Right lobe of liver (tissue), 6 donors: ENCODE measurements at regions of chr11 and their contacts with region 1.

Region 1: GRCh38 chr11:69101115-69101791 is 52.5 kb downstream of the TPCN2 start:
- DNase-seq: peak; percentile 79 to 82 (median 82)
- ATAC-seq: peak; percentile 95
- H3K4me3 ChIP-seq: no peak overlapping the region
- H3K27ac ChIP-seq: no peak overlapping the region
- H3K4me1 ChIP-seq: peaks cover 0 to 2% (median 0%) of the 10 kb centered on the region in 4 donors
- H3K27me3 ChIP-seq: no peaks in the 10 kb centered on the region
- CTCF ChIP-seq: peak; percentile 99 to 100 (median 99)
- POLR2A ChIP-seq: no peak

Region 2: GRCh38 chr11:69645295-69645694 is 544.0 kb after region 1 on chr11:
- intact Hi-C with region 1: loop called in 1 of 2 experiments (anchors 5 kb)
- DNase-seq: peak in 2 of 3 donors; percentile 14 to 56
- ATAC-seq: no peak
- H3K4me3 ChIP-seq: no peak overlapping the region
- H3K27ac ChIP-seq: no peak overlapping the region
- H3K4me1 ChIP-seq: peaks cover 0 to 20% (median 10%) of the 10 kb centered on the region in 4 donors
- H3K27me3 ChIP-seq: no peaks in the 10 kb centered on the region
- CTCF ChIP-seq: no peak
- POLR2A ChIP-seq: no peak

Region 3: GRCh38 chr11:69654569-69655327 is 553.5 kb after region 1 on chr11:
- intact Hi-C with region 1: loop called (anchors 5 kb)
- DNase-seq: peak; percentile 61 to 63 (median 63)
- ATAC-seq: peak; percentile 44 to 79 (median 66)
- H3K4me3 ChIP-seq: no peak overlapping the region
- H3K27ac ChIP-seq: no peak overlapping the region
- H3K4me1 ChIP-seq: peaks cover 0 to 13% (median 0%) of the 10 kb centered on the region in 4 donors
- H3K27me3 ChIP-seq: no peaks in the 10 kb centered on the region
- CTCF ChIP-seq: no peak
- POLR2A ChIP-seq: no peak